ENCODE measurements at regions of chr5 and their contacts with region 1.

Region 1: GRCh38 chr5:11143456-11144267 is 382.6 kb upstream of the DAP start:
- DNase-seq: peak; percentile 91
- H3K4me3 Mint-ChIP-seq: no peak overlapping the region
- H3K27ac Mint-ChIP-seq: no peak overlapping the region
- H3K4me1 Mint-ChIP-seq: peaks cover 9% of the 10 kb centered on the region
- H3K27me3 Mint-ChIP-seq: peaks cover 21% of the 10 kb centered on the region

Region 2: GRCh38 chr5:10249948-10250803 is 893.5 kb before region 1 on chr5 and contains the start of gene CCT5:
- CTCF ChIA-PET with region 1: no interaction called
- intact Hi-C with region 1: loop called (anchors 10 kb)
- DNase-seq: peak; percentile 93
- H3K4me3 Mint-ChIP-seq: peak within 1 kb of the TSS; percentile 86
- H3K27ac Mint-ChIP-seq: peak within 1 kb of the TSS; percentile 99
- H3K4me1 Mint-ChIP-seq: peaks cover 47% of the 10 kb centered on the region
- H3K27me3 Mint-ChIP-seq: no peaks in the 10 kb centered on the region
- total RNA-seq, gene CCT5: 414 to 419 TPM

Region 3: DNA sequence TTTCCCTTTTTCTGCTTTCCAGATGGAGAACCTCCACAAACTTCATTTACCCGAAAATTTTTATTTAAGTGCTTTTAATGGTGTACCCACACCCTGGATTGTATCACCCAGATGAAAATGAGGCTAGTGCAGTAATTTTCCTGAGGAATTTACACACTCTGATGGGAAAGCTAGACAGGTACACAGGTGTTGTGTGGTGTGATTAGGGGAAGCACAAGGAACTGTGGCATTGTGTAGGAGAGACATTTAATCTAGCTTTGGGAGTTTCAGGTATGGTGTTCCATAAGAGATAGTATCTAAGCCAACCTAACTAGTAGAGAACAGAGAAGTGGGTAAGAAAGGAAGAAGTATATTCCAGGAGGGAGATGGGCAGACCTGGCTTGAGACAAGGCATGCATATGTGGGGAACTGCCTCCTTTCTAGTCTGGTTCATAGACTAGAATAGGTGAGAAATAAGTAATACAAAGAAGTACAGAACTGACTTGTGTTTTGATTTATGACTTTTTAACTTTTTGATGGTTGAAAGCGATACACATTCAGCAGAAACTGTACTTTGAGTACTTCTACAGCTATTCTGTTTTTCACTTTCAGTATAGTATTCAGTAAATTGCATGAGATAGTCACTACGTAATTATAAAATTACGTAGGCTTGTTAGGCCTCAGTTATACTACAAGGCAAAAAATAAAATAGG is 724.9 kb before region 1 on chr5:
- CTCF ChIA-PET with region 1: no interaction called
- intact Hi-C with region 1: loop called (anchors 1 kb)
- DNase-seq: peak; percentile 21
- H3K4me3 Mint-ChIP-seq: no peak overlapping the region
- H3K27ac Mint-ChIP-seq: no peak overlapping the region
- H3K4me1 Mint-ChIP-seq: peaks cover 52% of the 10 kb centered on the region
- H3K27me3 Mint-ChIP-seq: no peaks in the 10 kb centered on the region

Region 4: DNA sequence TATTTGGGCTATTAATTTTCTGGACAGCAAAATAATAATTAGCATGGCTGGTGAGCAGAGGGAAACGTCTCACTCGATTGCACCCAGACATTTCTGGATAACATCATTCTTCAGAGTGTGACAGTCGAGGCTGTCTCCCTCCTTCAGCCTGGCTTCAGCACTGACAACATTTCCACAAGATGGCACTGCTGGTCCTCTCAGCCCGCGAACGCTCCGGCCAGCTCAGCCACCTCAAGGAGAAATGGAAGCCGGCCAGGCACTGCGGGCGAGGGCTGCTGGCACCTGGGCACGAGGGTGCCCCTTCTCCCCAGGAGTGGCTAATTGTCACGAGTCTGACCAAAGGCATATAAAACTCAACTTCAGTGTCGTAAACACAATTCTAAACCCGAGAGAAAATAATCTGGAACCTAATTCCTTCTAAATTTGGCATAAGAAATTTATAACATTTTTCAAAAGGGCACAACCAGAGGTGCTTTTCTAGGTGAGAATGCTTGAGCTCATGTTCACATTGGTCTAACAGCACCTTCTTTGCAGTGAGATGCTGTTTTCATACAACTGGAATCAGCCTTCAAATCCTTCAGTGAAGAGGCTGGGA is 448.5 kb before region 1 on chr5:
- CTCF ChIA-PET with region 1: no interaction called
- intact Hi-C with region 1: loop called (anchors 10 kb)
- DNase-seq: peak; percentile 56
- H3K4me3 Mint-ChIP-seq: no peak overlapping the region
- H3K27ac Mint-ChIP-seq: no peak overlapping the region
- H3K4me1 Mint-ChIP-seq: peaks cover 39% of the 10 kb centered on the region
- H3K27me3 Mint-ChIP-seq: no peaks in the 10 kb centered on the region

Region 5: DNA sequence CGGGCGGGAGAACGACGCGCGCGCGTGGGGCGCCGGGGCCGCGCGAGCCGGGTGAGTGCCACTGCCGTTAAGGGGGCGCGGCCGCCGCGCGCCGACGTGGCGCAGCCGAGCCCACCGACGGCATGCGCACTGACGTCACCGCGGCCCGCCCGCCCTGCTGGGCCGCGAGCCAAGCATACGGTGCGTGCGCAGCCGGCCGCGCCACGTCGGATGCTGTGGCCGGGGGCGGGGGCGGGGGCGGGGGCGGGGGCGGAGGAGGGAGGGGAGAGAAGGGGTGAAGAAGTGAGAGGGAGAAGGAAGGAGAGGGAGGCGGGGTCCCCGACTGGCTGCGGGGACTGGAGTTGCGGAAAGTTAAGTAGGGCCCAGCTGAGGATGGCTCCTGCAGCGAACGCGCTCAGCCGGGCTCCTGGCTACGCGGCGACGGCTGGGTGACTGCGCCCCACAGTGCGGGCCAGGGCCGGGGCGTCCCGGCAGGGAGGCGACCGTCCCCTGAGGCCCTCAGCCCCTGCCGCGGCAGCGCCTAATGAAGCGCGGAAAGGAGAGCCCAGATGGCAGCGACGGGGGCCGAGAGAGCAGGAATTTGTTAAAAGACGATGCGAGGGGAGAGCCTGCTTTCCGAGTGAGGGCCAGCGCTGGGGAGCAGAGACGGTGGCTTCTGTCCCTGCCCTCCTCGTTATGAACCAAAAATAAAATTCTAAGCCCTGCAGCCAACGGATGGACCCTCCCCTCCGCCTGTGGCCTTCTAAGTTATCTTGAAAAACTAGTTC is 382.3 kb before region 1 on chr5 and contains the start of gene DAP:
- CTCF ChIA-PET with region 1: no interaction called
- intact Hi-C with region 1: loop called (anchors 2 kb)
- DNase-seq: peak; percentile 78
- H3K4me3 Mint-ChIP-seq: peak within 1 kb of the TSS; percentile 84
- H3K27ac Mint-ChIP-seq: peak within 1 kb of the TSS; percentile 83
- H3K4me1 Mint-ChIP-seq: peaks cover 41% of the 10 kb centered on the region
- H3K27me3 Mint-ChIP-seq: peaks cover 3% of the 10 kb centered on the region
- total RNA-seq, gene DAP: 29.5 to 29.7 TPM

Region 6: DNA sequence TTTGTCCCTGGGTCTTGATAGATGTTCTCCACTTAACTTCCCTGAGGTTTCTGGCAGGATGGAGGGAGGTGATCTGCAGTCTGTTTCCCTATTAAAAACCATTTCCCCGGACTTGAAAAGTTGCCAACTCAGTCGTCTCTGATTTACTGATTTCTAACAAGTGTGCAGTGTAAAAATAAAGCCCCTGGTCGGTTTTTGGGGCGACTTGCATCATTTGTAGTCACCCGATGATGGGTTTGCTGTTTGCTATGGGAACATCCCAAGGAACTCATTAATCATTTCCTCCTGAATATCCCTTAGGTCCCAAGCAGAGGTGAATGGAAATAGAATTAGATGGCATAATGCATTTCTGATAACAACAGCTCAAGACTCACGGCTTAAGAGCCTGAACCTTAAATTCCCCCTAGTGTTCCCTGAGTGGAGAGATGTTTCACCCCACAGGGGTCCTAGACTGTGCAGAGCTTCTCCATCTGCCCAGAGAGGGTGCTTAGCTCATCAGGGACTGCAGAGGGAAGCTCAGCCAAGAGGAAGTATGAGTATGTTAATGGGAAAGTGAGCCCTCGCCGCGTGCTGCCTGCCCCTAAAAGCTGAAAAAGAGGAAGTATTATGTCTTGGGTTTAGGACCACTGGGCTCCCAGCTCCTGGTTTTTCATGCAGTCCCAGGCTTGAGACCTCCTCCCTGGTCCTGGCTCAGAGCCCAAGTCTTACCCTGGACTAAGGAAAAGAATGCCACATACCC is 267.5 kb before region 1 on chr5:
- CTCF ChIA-PET with region 1: no interaction called
- intact Hi-C with region 1: no loop called
- DNase-seq: no peak
- H3K4me3 Mint-ChIP-seq: no peak overlapping the region
- H3K27ac Mint-ChIP-seq: no peak overlapping the region
- H3K4me1 Mint-ChIP-seq: no peaks in the 10 kb centered on the region
- H3K27me3 Mint-ChIP-seq: peaks cover 16% of the 10 kb centered on the region

Region 7: DNA sequence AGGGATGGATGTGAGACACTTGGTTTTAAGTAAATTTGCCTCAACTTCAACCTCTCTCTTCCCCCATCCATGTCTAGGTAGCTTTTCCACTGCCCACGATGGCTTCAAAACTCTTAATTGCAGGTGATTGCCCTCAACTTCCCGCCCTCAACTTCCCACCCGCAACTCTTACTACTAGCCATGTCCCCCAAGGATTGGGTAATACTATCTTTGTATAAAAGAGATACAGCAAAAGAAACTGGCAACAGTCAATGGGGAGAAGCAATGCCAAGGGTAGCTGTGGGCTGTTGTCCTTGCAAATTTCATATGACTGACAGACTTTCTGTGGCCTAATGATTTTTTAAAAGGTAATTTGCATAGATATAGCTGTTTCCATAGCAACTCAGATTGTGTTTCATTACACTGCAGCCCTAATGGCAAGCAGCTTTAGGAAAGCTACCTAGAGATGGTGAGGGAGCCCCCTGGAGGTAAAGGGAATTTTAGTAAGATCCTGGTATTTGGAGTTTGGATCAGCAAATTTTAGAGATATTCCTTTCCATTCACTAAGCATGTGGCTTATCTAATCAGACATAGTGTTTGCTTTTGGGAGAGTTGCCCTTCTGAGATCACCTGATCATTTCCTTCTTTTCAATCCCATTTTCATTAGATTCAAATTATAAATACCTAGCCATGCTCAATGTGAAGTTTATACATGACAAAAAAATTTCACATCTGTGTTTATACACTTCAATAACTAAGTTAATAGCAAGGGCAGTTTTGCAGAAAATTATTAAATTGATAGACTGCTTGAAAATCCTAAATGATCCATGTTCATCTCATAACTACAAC is 39.0 kb after region 1 on chr5:
- CTCF ChIA-PET with region 1: no interaction called
- intact Hi-C with region 1: loop called (anchors 1 kb)
- DNase-seq: no peak
- H3K4me3 Mint-ChIP-seq: no peak overlapping the region
- H3K27ac Mint-ChIP-seq: no peak overlapping the region
- H3K4me1 Mint-ChIP-seq: peaks cover 6% of the 10 kb centered on the region
- H3K27me3 Mint-ChIP-seq: peaks cover 2% of the 10 kb centered on the region